Dendritic cell treated with granulocyte-macrophage colony-stimulating factor and Interleukin-4, amounts not matched to agents 40 ng/mL and 50 ng/mL, for 4 days (primary cell): ENCODE measurements at regions of chrX and their contacts with region 1.

Region 1: DNA sequence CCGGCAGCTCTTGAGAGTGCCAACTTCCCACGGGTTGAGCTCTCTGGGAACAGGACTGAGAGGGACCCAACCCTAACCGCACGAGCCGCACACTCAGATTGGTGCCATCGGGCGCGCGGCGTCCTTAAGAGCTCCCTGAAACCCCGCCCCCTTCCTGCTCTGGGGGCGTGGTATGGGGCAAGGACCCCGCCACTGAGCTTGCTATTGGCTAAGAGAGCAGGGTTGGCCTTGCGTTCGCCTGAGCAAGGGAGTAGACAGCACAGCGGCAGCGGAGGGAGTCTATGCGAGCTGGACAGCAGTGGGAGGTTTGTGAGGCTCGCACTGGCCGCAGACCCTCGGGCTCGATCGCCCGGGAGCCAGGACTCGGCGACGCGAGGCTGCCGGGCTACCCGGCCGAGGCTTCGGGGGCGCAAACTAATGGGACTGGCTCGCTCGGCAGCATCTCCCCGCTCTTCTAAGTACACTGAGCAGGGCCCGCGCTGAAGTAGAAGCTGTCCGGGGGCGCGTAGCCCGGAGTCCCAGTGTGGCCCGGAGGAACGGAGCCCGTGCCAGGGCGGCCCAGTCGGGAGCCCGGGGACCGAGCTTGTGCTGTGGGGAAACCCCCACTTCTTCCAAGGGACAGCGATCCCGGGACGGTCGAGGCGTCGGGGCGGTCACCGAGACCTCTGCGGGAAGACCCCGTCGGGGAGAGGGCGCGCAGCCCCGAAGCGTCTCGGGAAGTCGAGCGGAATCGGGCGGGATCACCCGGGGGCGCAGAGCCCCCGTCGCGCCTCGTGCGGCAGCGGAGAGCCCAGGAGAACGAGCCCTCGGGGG is at the start of gene EFNB1:
- H3K4me3 Mint-ChIP-seq: peak within 1 kb of the TSS; percentile 85
- H3K27ac Mint-ChIP-seq: peak within 1 kb of the TSS; percentile 79
- H3K4me1 Mint-ChIP-seq: peaks cover 37% of the 10 kb centered on the region
- H3K27me3 Mint-ChIP-seq: peaks cover 30% of the 10 kb centered on the region

Region 2: DNA sequence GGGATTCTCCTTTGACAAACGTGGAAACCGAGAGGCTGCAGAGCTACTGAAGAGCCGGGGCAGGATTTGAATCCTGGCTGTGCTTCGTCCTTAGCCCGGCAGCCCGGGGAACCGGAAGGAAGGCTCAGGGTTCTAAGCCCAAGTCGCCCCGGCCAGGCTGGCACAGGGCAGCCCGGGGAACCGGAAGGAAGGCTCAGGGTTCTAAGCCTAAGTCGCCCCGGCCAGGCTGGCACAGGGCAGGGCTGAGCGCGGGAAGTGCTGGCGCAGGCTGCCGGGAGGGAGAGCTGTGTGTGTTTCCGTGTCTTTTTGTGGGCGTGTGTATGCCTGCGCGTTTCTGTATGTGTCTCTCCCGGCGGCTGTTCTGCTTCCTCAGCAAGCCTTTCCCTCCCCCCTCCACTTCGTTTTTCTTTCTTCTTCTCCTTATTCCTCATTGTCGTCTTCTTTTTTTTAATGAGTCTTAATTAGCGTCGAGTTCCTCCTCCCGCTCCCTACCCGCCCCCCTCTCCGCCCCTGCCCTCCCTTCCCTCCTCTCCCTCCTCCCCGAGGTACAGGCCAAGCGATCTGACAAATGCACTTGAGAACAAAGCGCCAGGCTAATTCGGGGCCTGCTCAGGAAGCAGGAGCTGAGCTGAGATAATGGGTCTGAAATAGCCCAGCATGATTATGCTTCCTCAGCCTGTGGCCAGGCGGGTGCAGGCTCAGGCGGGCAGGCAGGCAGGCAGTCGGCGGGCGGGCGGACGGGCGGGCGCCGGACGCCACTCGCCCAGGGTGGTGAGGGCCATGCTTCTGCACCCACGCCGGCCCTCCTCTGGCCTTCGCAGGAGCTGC is 65.8 kb after region 1 on chrX:
- intact Hi-C with region 1: loop called (anchors 10 kb)
- H3K4me3 Mint-ChIP-seq: peak overlapping the region; percentile 34
- H3K27ac Mint-ChIP-seq: peak overlapping the region; percentile 87
- H3K4me1 Mint-ChIP-seq: peaks cover 40% of the 10 kb centered on the region
- H3K27me3 Mint-ChIP-seq: peaks cover 4% of the 10 kb centered on the region

Region 3: DNA sequence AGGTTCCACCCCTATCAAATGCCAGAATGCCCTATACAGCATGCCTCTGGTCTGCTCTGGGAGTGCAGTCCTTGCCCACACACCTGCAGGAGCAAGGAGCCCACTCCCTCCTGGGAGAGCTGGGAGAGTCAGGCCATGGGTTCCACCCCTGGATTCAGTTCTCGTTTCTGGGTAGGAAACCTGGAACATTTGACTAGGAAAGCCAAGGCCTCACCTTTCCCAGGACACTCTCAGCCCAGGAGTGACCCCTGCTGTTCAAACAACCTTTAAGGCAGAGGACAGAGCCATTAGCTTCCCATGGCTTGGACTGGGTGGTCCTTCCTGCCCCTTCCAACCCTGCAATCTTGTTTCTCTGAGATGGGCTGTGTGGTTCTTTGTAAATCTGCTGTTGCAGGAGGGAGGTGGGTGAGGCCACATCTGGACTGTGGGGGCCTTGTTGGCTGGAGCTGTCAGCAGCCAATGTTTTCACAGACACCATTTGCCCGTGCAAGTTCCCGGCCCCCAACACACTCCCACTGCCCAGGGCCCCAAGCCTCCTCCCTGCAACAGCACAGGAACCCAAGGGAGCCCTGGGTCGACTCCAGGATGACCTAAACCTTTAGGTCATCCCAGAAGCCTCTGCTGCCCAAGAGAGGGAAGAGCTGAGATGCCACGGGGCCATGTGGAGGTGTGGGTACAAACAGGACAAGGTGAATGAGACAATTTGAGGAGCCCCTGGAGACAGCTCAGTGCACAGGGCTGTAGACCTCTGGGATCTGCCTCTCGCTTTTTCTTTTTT is 231.9 kb after region 1 on chrX:
- intact Hi-C with region 1: loop called (anchors 1 kb)
- H3K4me3 Mint-ChIP-seq: no peak overlapping the region
- H3K27ac Mint-ChIP-seq: no peak overlapping the region
- H3K4me1 Mint-ChIP-seq: no peaks in the 10 kb centered on the region
- H3K27me3 Mint-ChIP-seq: peaks cover 3% of the 10 kb centered on the region